Breast epithelium (tissue), 4 donors: ENCODE measurements at regions of chr1 and their contacts with region 1.

Region 1: DNA sequence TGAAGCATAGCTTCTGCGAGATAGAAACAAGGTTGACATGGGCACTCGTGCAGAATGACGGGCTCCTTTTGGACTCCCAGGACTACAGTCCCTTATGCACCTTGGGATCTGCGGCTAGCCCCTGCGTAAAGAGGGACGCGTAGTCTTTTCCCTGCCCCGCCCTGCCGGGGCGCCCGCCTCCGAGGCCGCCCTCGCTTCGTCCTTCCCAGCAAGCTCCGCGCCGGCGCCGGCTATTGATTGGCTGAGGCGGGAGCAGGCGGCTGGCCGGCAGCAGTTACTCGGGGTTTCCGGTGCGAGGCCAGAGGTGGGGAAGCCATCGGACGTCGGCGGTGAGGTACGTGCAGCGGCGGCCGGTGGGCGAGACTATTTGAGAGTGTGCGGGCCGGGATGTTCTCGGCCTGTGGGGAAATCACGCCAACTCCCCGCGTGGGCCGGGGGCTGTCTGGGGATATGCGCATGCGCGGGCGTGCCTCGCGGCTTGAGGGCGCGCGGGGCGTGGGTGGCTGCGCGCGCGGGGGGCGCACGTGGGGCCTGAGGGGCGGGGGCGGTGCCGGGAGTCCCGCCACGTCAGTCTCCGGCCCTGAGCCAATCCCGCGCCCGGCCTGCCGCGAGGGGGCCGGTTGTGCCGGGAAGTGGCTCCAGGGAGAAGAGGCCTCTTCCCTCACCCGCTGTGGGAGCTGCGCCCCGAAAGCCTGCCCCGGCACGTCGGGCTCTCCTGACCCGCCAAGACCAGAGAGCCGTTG is at the start of gene TXLNA:
- DNase-seq: peak; percentile 91 to 92
- H3K4me3 ChIP-seq: peak within 1 kb of the TSS; percentile 62 to 76 (median 71)
- H3K27ac ChIP-seq: peak within 1 kb of the TSS; percentile 91 to 98
- H3K4me1 ChIP-seq: peaks cover 0 to 21% of the 10 kb centered on the region in 2 donors
- H3K27me3 ChIP-seq: no peaks in the 10 kb centered on the region
- CTCF ChIP-seq: peak in 2 of 3 donors; percentile 12 to 27
- POLR2A ChIP-seq: no peak
- total RNA-seq, gene TXLNA: 38.7 to 51.8 (median 45.8) TPM

Region 2: GRCh38 chr1:32231843-32232432 is 52.3 kb after region 1 on chr1:
- intact Hi-C with region 1: loop called (anchors 2 kb)
- DNase-seq: no peak
- H3K4me3 ChIP-seq: no peak overlapping the region
- H3K27ac ChIP-seq: no peak overlapping the region
- H3K4me1 ChIP-seq: no peaks in the 10 kb centered on the region
- H3K27me3 ChIP-seq: no peaks in the 10 kb centered on the region
- CTCF ChIP-seq: no peak
- POLR2A ChIP-seq: no peak

Region 3: DNA sequence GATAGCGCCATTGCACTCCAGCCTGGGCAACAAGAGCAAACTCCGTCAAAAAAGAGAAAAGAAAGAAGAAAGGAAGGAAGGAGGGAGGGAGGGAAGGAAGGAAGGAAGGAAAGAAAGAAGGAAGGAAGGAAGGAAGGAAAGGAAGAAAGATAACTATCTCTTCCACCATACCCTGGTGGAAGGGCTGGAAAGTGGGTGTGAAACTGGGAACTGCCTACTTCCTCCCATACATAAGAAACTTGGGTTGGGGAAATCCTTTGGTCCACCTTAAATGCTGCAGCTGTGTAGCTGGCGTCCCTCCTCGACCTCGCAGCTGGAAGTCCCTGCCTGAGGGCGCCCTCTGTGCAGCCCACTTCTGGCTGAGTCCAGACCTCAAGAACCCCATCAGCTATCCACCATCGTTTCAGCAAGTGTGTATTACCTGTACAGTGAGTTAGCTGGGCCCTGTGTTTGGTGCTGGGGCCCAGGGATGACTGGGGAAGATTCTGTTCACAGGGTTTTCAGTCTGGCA is 62.8 kb after region 1 on chr1:
- intact Hi-C with region 1: no loop called
- DNase-seq: no peak
- H3K4me3 ChIP-seq: peak overlapping the region in 1 of 3 donors; percentile 30
- H3K27ac ChIP-seq: peak overlapping the region in 1 of 2 donors; percentile 74
- H3K4me1 ChIP-seq: peaks cover 3 to 9% of the 10 kb centered on the region in 2 donors
- H3K27me3 ChIP-seq: no peaks in the 10 kb centered on the region
- CTCF ChIP-seq: no peak
- POLR2A ChIP-seq: no peak